Activated B cell treated with CpG ODN at 0.5 μM for 24 hours (primary cell): ENCODE measurements at regions of chr1 and their contacts with region 1.

Region 1: GRCh38 chr1:160681067-160681890 is 30.3 kb downstream of the CD48 start:
- DNase-seq: peak; percentile 67
- ATAC-seq: peak; percentile 89
- H3K4me3 Mint-ChIP-seq: no peak overlapping the region
- H3K27ac Mint-ChIP-seq: peak overlapping the region; percentile 79
- H3K4me1 Mint-ChIP-seq: peaks cover 52% of the 10 kb centered on the region
- H3K27me3 Mint-ChIP-seq: no peaks in the 10 kb centered on the region
- CTCF ChIP-seq: no peak

Region 2: GRCh38 chr1:160704250-160704649 is 23.0 kb after region 1 on chr1:
- CTCF ChIA-PET with region 1: interaction called, 7 read pairs
- POLR2A ChIA-PET with region 1: interaction called, 12 read pairs
- intact Hi-C with region 1: loop called (anchors 2 kb)
- DNase-seq: no peak
- ATAC-seq: peak; percentile 38
- H3K4me3 Mint-ChIP-seq: peak overlapping the region; percentile 76
- H3K27ac Mint-ChIP-seq: no peak overlapping the region
- H3K4me1 Mint-ChIP-seq: peaks cover 4% of the 10 kb centered on the region
- H3K27me3 Mint-ChIP-seq: no peaks in the 10 kb centered on the region
- CTCF ChIP-seq: no peak

Region 3: DNA sequence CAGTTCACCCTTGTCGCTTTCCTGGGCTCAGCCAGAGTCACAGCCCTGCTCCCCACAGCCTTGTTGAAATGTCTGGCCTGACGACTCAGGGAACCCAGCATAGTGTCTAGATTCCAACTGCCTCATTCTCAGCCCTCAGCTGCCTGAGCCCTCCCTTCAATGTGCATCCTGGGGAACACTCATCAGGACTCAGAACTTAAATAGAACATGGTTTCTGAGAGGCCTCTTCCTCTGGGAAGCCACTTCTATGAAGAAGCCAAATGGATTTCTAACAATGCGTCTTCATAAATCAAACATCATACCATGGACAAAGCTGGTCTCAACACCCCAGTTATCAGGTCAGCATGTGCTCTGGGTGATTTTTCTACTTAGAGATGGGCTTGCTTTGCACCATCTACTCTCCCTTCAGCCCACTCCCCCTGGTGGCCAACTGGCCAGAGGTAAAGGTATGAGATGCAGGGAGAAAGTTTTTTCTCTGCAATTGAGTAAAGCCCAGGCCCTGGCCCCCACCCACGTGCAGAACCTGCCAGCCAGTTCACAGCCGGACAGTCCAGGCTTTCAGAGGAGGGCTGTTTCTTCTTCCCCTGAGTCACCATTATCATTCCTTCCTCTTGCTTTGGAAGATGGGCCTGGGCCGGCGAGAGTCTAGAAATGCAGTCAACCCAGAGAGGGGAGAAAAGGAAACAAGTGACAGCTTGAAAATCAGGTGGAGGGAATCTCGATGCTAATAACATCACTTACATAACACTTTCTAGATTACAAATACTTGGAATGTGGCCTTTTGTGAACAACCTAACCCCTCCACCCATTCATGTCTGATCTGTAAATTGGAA is 149.3 kb after region 1 on chr1:
- CTCF ChIA-PET with region 1: interaction called, 5 read pairs
- POLR2A ChIA-PET with region 1: interaction called, 3 read pairs
- intact Hi-C with region 1: loop called (anchors 1 kb)
- DNase-seq: peak; percentile 56
- ATAC-seq: peak; percentile 83
- H3K4me3 Mint-ChIP-seq: no peak overlapping the region
- H3K27ac Mint-ChIP-seq: peak overlapping the region; percentile 68
- H3K4me1 Mint-ChIP-seq: peaks cover 9% of the 10 kb centered on the region
- H3K27me3 Mint-ChIP-seq: no peaks in the 10 kb centered on the region
- CTCF ChIP-seq: no peak

Region 4: GRCh38 chr1:160951443-160952128 is 270.3 kb after region 1 on chr1:
- CTCF ChIA-PET with region 1: interaction called, 27 read pairs
- POLR2A ChIA-PET with region 1: no interaction called
- intact Hi-C with region 1: loop called (anchors 1 kb)
- DNase-seq: peak; percentile 46
- ATAC-seq: peak; percentile 89
- H3K4me3 Mint-ChIP-seq: no peak overlapping the region
- H3K27ac Mint-ChIP-seq: no peak overlapping the region
- H3K4me1 Mint-ChIP-seq: peaks cover 7% of the 10 kb centered on the region
- H3K27me3 Mint-ChIP-seq: no peaks in the 10 kb centered on the region
- CTCF ChIP-seq: no peak

Region 5: DNA sequence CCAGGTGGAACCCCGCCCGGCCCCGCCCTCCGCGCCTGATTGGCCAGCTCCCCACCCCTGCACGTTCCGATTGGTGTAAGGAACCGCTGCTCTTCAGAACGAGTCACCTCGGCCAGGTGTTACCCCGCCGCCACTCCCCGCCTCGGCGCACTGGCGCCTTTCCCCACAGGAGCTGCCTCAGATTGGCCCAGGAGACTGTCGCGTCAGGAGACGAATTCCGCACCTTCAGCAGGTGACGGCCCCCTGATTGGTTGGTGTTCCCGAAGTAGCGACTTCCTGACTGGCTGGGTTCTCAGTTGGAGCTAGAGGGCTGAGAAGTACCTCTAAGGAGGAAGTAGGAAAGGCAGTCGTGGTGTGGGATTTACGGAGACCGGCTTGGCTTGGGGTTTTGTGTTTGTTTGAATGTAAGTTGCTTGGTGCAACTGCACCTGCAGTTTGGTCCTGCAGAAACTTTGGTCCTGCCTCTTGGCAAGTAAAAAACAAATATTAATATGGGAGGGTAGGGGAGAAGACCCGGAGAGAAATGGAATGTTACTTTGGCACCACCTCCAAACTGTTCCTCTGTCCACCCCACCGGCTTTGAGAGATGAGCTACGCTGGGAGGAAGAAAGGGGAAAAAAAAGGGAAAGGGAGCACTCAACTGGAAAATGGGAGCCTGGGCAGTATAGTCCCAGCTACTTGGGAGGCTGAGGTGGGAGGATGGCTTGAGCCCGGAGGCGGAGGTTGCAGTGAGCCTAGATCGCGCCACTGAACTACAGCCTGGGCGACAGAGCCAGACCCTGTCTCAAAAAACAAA is 340.1 kb after region 1 on chr1:
- CTCF ChIA-PET with region 1: no interaction called
- POLR2A ChIA-PET with region 1: no interaction called
- intact Hi-C with region 1: no loop called
- DNase-seq: peak; percentile 74
- ATAC-seq: peak; percentile 92
- H3K4me3 Mint-ChIP-seq: peak overlapping the region; percentile 95
- H3K27ac Mint-ChIP-seq: peak overlapping the region; percentile 91
- H3K4me1 Mint-ChIP-seq: peaks cover 27% of the 10 kb centered on the region
- H3K27me3 Mint-ChIP-seq: no peaks in the 10 kb centered on the region
- CTCF ChIP-seq: no peak